Activated T-helper 2 cell treated with anti-CD3 and anti-CD28 coated beads, Interferon-gamma antibody, Interleukin-2, Interleukin-4, amounts not matched to agents 10 μg/mL and 5 μg/mL and 100 μg/mL, durations not matched to agents 14 hours and 24 hours and 36 hours (primary cell): ENCODE measurements at regions of chr17 and their contacts with region 1.

Region 1: DNA sequence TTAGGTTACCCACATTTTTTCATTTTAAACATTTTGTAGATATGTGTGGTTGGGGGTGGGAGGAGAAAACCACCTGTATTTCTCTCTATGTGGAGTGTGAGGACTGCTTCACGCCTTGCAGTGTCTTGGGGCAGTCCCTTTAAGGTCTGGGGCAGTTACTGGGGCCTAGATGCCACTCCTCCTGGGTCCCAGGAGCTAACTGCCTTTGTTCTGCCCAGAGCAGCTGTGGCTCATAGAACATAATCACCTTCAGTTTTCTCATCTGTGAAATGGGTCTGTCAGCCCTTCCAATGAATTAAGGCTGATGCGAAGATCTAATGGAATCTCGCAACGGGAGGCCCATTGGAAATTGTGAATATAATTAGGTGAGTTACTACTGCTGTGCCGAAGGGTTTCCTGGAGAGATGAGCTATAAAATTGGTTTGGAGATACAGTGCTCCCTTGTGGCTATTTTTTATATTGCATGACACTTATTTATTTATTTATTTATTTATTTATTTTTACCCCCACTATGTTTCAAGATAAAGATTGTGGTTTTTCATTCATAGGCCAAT is 22.9 kb downstream of the DHRS7C start:
- DNase-seq: no peak
- H3K4me3 Mint-ChIP-seq: no peak overlapping the region
- H3K27ac Mint-ChIP-seq: no peak overlapping the region
- H3K4me1 Mint-ChIP-seq: peaks cover 4% of the 10 kb centered on the region
- H3K27me3 Mint-ChIP-seq: no peaks in the 10 kb centered on the region

Region 2: DNA sequence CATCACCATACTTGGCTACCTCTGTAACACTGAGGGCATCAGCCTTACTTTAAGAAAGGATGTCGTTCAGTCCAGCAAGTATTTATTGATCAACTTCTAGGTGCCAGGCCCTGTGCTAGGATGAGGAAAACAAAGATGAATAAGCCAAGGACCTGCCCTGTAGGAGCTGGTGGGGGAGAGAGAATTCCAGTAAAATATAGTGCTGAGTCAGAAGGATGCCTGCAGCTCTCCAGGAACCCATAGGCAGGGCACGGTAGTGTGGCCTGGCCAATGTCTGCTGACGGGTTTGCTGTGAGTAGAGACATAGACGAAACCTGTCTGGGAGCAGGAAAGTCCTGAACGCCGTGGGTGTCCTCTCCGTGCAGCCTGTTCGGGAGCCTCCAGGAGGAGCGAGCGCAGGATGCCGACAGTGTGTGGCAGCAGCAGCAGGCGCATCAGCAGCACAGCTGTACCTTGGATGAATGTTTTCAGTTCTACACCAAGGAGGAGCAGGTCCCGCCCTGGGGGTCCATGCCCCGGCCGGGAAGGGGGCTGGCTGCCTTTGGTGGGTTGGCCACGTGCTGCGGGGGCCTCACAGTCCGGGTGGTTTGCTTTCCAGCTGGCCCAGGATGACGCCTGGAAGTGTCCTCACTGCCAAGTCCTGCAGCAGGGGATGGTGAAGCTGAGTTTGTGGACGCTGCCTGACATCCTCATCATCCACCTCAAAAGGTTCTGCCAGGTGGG is 67.5 kb before region 1 on chr17:
- intact Hi-C with region 1: no loop called
- DNase-seq: no peak
- H3K4me3 Mint-ChIP-seq: no peak overlapping the region
- H3K27ac Mint-ChIP-seq: no peak overlapping the region
- H3K4me1 Mint-ChIP-seq: no peaks in the 10 kb centered on the region
- H3K27me3 Mint-ChIP-seq: no peaks in the 10 kb centered on the region

Region 3: GRCh38 chr17:9729034-9729650 is 39.3 kb before region 1 on chr17:
- intact Hi-C with region 1: loop called (anchors 2 kb)
- DNase-seq: no peak
- H3K4me3 Mint-ChIP-seq: no peak overlapping the region
- H3K27ac Mint-ChIP-seq: no peak overlapping the region
- H3K4me1 Mint-ChIP-seq: no peaks in the 10 kb centered on the region
- H3K27me3 Mint-ChIP-seq: peaks cover 2% of the 10 kb centered on the region

Region 4: GRCh38 chr17:9743096-9743495 is 25.4 kb before region 1 on chr17:
- intact Hi-C with region 1: no loop called
- DNase-seq: no peak
- H3K4me3 Mint-ChIP-seq: no peak overlapping the region
- H3K27ac Mint-ChIP-seq: no peak overlapping the region
- H3K4me1 Mint-ChIP-seq: no peaks in the 10 kb centered on the region
- H3K27me3 Mint-ChIP-seq: peaks cover 3% of the 10 kb centered on the region